IMR-90 (cell line): ENCODE measurements at regions of chr2 and their contacts with region 1.

Region 1: GRCh38 chr2:150459281-150459680 is 28.2 kb downstream of the RND3 start:
- DNase-seq: peak; percentile 34
- ATAC-seq: no peak
- H3K4me3 ChIP-seq: no peak overlapping the region
- H3K27ac ChIP-seq: no peak overlapping the region
- H3K4me1 ChIP-seq: no peaks in the 10 kb centered on the region
- H3K27me3 ChIP-seq: no peaks in the 10 kb centered on the region
- CTCF ChIP-seq: no peak
- POLR2A ChIP-seq: no peak
- RAD21 ChIP-seq: no peak

Region 2: GRCh38 chr2:150303281-150303680 is 156.0 kb before region 1 on chr2:
- CTCF ChIA-PET with region 1: no interaction called
- POLR2A ChIA-PET with region 1: no interaction called
- dilution Hi-C with region 1: no loop called
- in situ Hi-C with region 1: no loop called
- intact Hi-C with region 1: no loop called
- DNase-seq: no peak
- ATAC-seq: no peak
- H3K4me3 ChIP-seq: no peak overlapping the region
- H3K27ac ChIP-seq: no peak overlapping the region
- H3K4me1 ChIP-seq: no peaks in the 10 kb centered on the region
- H3K27me3 ChIP-seq: no peaks in the 10 kb centered on the region
- CTCF ChIP-seq: no peak
- POLR2A ChIP-seq: no peak
- RAD21 ChIP-seq: no peak

Region 3: DNA sequence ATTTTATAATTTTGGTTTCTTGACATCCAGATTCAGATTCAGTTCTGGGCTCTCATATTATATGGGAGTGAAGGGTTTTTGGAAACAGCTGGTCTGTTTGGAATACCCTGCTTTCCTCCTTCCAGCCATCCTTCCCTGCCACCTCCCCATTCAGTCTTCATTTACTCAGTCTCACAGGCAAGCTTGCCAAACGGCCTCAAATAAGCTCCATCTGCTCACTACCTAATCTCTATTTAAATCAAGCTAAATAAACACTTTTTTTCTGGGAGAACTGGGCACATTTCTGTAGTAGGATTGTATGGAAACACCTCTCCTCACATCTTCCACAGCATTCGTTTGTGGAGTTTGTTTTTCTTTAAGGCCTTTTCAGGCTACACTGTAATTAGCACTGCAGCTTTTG is 119.3 kb before region 1 on chr2:
- CTCF ChIA-PET with region 1: no interaction called
- POLR2A ChIA-PET with region 1: no interaction called
- dilution Hi-C with region 1: no loop called
- in situ Hi-C with region 1: no loop called
- intact Hi-C with region 1: no loop called
- DNase-seq: peak; percentile 20
- ATAC-seq: peak; percentile 60
- H3K4me3 ChIP-seq: no peak overlapping the region
- H3K27ac ChIP-seq: no peak overlapping the region
- H3K4me1 ChIP-seq: no peaks in the 10 kb centered on the region
- H3K27me3 ChIP-seq: no peaks in the 10 kb centered on the region
- CTCF ChIP-seq: no peak
- POLR2A ChIP-seq: no peak
- RAD21 ChIP-seq: no peak

Region 4: DNA sequence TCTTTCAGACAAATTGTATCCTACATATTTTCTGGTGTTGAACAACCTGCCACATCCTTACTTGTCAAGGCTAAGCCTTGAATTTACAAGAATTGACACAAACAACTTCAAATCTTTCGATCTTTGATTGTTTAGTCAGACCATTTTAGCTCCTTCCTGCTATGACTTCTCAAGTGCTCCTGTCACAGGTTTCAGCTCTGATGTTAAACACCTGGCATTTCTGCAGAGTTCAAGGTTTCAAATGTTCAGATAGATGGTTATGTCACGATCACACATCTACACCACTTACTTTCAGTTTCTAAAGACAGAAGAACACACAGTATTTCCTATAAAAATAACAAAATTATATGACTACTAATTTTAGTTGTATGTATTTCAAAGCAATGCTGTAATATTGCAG is 55.8 kb before region 1 on chr2:
- CTCF ChIA-PET with region 1: no interaction called
- POLR2A ChIA-PET with region 1: no interaction called
- dilution Hi-C with region 1: no loop called
- in situ Hi-C with region 1: no loop called
- intact Hi-C with region 1: loop called (anchors 10 kb)
- DNase-seq: no peak
- ATAC-seq: peak; percentile 21; the same call in 1 of the 2 replicates
- H3K4me3 ChIP-seq: peak overlapping the region; percentile 51
- H3K27ac ChIP-seq: no peak overlapping the region
- H3K4me1 ChIP-seq: peaks cover 2% of the 10 kb centered on the region
- H3K27me3 ChIP-seq: no peaks in the 10 kb centered on the region
- CTCF ChIP-seq: no peak
- POLR2A ChIP-seq: no peak
- RAD21 ChIP-seq: no peak